Activated T-helper 1 cell treated with anti-CD3 and anti-CD28 coated beads, Interleukin-12 subunit alpha, Interleukin-12 subunit beta, Interleukin-2, Interleukin-4 antibody, amounts not matched to agents 30 ng/mL and 10 ng/mL and 1 ng/mL, durations not matched to agents 14 hours and 24 hours and 36 hours (primary cell): ENCODE measurements at regions of chr6 and their contacts with region 1.

Region 1: DNA sequence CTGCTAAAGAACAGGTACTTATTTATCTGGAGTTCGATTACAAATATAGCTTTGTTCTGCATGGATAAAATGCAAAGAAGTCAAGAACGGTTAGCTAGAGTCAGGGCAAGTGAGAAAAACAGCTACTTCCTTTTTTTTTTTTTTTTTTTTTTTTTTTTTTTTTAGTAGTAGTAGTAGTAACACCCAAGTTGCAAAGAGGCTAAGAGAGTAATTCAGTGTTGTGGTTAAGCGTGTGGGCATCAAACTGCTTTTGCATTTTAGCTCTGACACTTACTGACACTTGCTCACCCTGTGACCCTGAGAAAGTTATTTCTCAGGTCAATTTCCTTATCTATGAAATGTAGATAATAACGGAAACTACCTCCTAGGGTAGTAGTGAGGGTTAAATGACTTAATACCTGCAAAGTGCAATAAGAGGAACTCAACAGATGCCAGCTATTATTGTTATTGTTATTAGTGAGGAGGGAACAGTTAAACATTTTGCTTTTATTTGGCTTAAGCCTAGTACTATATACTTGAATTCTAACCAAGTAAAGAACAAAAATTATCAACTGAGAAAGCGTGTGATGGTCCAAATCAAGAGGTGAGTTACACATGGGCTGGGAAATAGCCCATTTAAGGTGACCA is 86.7 kb upstream of the BACH2 start:
- DNase-seq: no peak
- H3K4me3 Mint-ChIP-seq: no peak overlapping the region
- H3K27ac Mint-ChIP-seq: peak overlapping the region; percentile 1
- H3K4me1 Mint-ChIP-seq: peaks cover 38% of the 10 kb centered on the region
- H3K27me3 Mint-ChIP-seq: peaks cover 11% of the 10 kb centered on the region

Region 2: GRCh38 chr6:90304308-90304707 is 79.0 kb before region 1 on chr6:
- intact Hi-C with region 1: loop called (anchors 2 kb)
- DNase-seq: no peak
- H3K4me3 Mint-ChIP-seq: no peak overlapping the region
- H3K27ac Mint-ChIP-seq: no peak overlapping the region
- H3K4me1 Mint-ChIP-seq: peaks cover 20% of the 10 kb centered on the region
- H3K27me3 Mint-ChIP-seq: peaks cover 51% of the 10 kb centered on the region

Region 3: DNA sequence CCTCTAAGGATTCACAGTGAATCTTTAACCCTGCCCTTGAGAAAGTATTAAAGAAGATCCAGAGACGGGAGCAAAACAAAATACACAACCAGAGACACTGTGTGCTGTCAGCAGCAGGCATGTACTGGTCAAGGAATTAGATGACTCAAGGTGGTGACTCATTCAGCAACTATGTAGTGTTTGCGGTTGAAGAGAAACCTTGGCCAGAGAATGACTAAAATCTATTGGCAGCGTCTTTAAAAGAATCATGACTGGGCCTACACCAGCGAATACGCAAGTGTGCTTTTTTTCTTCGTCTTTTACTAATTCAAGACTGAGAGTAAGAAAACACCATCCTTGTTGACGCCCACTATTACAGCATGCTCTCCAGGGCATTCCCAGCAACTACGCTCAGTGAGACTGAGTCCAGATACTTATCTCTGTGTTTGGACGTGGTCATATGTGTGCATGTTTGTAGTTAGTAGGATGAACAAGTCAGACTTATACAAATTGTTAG is 14.2 kb before region 1 on chr6:
- intact Hi-C with region 1: loop called (anchors 1 kb)
- DNase-seq: no peak
- H3K4me3 Mint-ChIP-seq: no peak overlapping the region
- H3K27ac Mint-ChIP-seq: peak overlapping the region; percentile 46
- H3K4me1 Mint-ChIP-seq: peaks cover 22% of the 10 kb centered on the region
- H3K27me3 Mint-ChIP-seq: peaks cover 4% of the 10 kb centered on the region